ENCODE measurements at regions of chr1 and their contacts with region 1.

Region 1: DNA sequence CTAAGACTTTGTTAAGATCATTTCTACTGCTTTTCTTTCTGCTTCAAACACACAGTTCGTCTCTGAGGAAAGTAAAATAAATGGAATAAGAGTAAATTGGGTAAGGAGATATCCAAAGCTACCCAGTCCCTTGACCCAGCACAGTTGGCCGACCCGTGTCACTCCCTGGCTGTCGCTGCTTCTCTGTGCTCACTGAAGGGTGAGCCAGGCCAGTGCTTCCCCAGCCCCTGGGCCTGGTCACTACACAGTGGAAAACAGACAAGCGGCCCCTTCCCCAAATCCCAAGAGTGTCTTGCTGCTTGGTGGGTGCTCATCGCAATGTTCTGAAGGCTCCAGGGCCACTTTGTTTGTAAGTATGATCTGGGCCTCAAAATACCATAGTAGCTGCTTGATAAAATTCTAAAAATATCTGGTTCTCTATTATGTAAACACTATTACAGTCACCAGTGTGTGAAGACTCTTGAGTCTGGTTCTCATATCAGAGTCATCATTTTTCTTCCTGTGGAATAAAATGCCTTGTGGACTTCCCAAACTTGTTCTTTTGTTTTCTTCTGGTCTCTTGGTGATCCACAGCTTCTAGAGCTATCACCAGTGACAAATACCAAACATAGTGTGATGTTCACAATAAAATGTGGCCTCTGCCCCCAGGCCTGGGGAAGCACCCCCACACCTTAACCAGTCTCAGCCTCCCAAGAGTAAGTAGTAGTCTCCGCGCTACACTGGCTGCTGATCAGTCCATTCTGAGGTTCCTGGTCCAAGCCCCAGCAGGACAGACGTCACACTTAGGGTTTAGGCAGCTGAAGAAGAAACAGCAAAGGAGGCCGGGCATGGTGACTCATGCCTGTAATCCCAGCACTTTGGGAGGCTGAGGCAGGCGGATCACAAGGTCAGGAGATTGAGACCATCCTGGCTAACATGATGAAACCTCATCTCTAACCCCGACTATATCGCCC is 106.2 kb downstream of the DHRS3 start:
- DNase-seq: no peak
- ATAC-seq: no peak
- H3K4me3 ChIP-seq: peak overlapping the region; percentile 69
- H3K4me3 Mint-ChIP-seq: peak overlapping the region; percentile 79 to 97 (median 88)
- H3K27ac ChIP-seq: peak overlapping the region; percentile 75
- H3K27ac Mint-ChIP-seq: peak overlapping the region; percentile 94 to 100 (median 98)
- H3K4me1 ChIP-seq: peaks cover 26% of the 10 kb centered on the region in 2 donors
- H3K4me1 Mint-ChIP-seq: peaks cover 30 to 72% (median 59%) of the 10 kb centered on the region in 7 donors
- H3K27me3 ChIP-seq: no peaks in the 10 kb centered on the region
- H3K27me3 Mint-ChIP-seq: no peaks in the 10 kb centered on the region

Region 2: GRCh38 chr1:12100071-12100470 is 411.7 kb before region 1 on chr1:
- CTCF ChIA-PET with region 1: no interaction called
- POLR2A ChIA-PET with region 1: no interaction called
- intact Hi-C with region 1: no loop called
- DNase-seq: no peak
- ATAC-seq: no peak
- H3K4me3 ChIP-seq: no peak overlapping the region
- H3K4me3 Mint-ChIP-seq: no peak overlapping the region
- H3K27ac ChIP-seq: no peak overlapping the region
- H3K27ac Mint-ChIP-seq: no peak overlapping the region
- H3K4me1 ChIP-seq: peaks cover 0 to 4% of the 10 kb centered on the region in 2 donors
- H3K4me1 Mint-ChIP-seq: peaks cover 0 to 16% (median 0%) of the 10 kb centered on the region in 7 donors
- H3K27me3 ChIP-seq: no peaks in the 10 kb centered on the region
- H3K27me3 Mint-ChIP-seq: no peaks in the 10 kb centered on the region

Region 3: DNA sequence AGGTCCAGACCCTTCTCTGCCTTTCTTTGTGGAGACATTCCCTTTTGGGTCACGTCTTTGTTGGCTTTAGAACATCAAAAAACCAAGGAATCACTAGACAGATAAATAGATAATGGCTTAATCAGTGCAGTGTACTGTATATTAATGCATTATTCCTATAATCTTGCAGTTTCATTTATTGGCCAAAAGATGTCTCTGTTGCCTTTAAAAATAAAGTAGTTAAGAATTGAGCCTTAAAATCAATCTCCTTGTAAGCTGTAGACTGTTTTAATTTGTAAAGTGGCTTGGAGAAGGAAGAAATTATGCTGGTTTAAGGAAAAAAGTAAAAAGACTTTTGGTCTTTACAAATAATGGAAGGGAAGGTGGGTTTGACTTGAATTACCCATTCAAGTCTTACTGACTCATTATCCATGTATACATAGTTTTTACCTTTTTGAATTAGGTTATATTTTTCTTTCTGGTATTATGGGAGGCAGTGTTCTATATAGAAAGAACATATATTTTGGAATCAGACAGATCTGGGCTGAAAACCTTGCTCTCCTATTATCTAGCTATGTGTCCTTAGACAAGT is 197.4 kb before region 1 on chr1:
- CTCF ChIA-PET with region 1: no interaction called
- POLR2A ChIA-PET with region 1: no interaction called
- intact Hi-C with region 1: no loop called
- DNase-seq: peak in 5 of 9 donors; percentile 8 to 41 (median 17)
- ATAC-seq: no peak
- H3K4me3 ChIP-seq: no peak overlapping the region
- H3K4me3 Mint-ChIP-seq: no peak overlapping the region
- H3K27ac ChIP-seq: no peak overlapping the region
- H3K27ac Mint-ChIP-seq: no peak overlapping the region
- H3K4me1 ChIP-seq: no peaks in the 10 kb centered on the region
- H3K4me1 Mint-ChIP-seq: peaks cover 0 to 5% (median 0%) of the 10 kb centered on the region in 7 donors
- H3K27me3 ChIP-seq: no peaks in the 10 kb centered on the region
- H3K27me3 Mint-ChIP-seq: no peaks in the 10 kb centered on the region

Region 4: DNA sequence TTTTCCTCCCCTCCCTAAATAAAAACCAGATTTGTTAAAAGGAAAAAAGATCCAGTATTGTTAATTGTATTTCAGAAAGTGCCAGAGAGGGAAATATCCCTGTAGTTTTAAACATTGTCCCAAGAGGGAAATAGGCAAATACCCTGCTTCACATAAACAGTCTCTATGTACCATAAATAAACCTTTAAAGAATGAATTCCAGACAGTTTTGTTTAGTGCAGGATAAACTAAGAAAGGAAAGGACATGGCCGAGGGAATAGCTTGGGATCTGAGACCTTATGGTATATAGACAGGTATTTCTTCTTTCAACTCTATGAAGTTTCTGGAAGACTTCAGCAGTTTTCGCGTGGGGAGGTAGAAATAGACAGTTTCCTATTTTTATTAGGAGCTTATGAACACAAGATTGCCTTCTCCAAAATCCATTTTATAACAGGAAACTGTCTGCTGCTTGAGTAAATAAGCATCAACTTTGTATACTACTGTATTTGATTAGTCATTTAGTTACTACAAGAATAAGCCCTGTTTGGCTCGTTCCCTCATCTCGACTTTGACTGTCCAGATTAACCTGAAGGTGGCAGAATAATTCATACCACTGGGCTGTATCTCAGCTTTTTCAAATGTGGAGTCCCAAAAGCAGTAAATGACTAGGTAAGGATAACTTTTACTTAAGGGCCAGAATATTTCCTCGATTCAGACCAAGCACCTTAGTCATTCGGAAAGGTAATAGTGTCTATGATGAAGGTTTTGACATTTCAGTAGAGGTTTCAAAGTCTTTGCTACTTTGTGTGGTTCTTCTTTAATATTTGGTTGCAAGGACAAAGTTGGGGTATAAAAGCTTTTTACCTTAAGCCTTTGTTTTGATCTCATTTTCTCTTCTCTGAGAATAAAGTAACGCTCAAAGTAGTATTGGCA is 104.5 kb before region 1 on chr1:
- CTCF ChIA-PET with region 1: interaction called, 3 read pairs
- POLR2A ChIA-PET with region 1: interaction called, 4 read pairs
- intact Hi-C with region 1: loop called in 1 of 2 experiments (anchors 5 kb)
- DNase-seq: peak in 5 of 9 donors; percentile 20 to 45 (median 43)
- ATAC-seq: peak; percentile 49
- H3K4me3 ChIP-seq: no peak overlapping the region
- H3K4me3 Mint-ChIP-seq: no peak overlapping the region
- H3K27ac ChIP-seq: no peak overlapping the region
- H3K27ac Mint-ChIP-seq: peak overlapping the region in 2 of 9 donors; percentile 59 to 61
- H3K4me1 ChIP-seq: peaks cover 0 to 11% of the 10 kb centered on the region in 2 donors
- H3K4me1 Mint-ChIP-seq: peaks cover 10 to 57% (median 47%) of the 10 kb centered on the region in 7 donors
- H3K27me3 ChIP-seq: no peaks in the 10 kb centered on the region
- H3K27me3 Mint-ChIP-seq: no peaks in the 10 kb centered on the region

Region 5: DNA sequence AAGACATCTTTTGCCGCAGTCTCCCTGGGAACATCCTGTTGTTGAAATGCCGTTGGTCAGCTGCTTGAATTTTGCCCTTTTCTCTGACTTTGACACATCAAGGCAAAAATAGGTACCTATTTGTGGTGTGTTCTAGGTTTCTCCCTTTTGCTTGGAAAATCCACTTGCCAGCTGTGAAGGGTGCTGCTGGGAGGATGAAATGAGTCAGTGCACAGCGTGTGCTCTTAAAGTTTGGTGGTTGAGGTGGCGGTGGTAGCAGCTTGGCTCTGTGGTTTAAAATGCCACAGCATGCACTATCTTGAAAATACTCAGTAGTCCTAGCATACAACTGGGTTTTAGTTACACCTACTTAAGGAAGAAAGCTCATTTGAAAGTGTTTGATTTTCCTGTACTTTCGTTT is 77.6 kb before region 1 on chr1:
- CTCF ChIA-PET with region 1: interaction called, 4 read pairs
- POLR2A ChIA-PET with region 1: interaction called, 9 read pairs
- intact Hi-C with region 1: loop called (anchors 2 kb)
- DNase-seq: peak in 6 of 9 donors; percentile 32 to 70 (median 46)
- ATAC-seq: peak; percentile 79
- H3K4me3 ChIP-seq: peak overlapping the region; percentile 44
- H3K4me3 Mint-ChIP-seq: peak overlapping the region; percentile 54 to 76 (median 70)
- H3K27ac ChIP-seq: peak overlapping the region; percentile 58
- H3K27ac Mint-ChIP-seq: peak overlapping the region; percentile 69 to 92 (median 84)
- H3K4me1 ChIP-seq: peaks cover 52 to 56% of the 10 kb centered on the region in 2 donors
- H3K4me1 Mint-ChIP-seq: peaks cover 46 to 85% (median 71%) of the 10 kb centered on the region in 7 donors
- H3K27me3 ChIP-seq: no peaks in the 10 kb centered on the region
- H3K27me3 Mint-ChIP-seq: no peaks in the 10 kb centered on the region

Region 6: GRCh38 chr1:12454406-12455391 is 57.1 kb before region 1 on chr1:
- CTCF ChIA-PET with region 1: interaction called, 5 read pairs
- POLR2A ChIA-PET with region 1: interaction called, 11 read pairs
- intact Hi-C with region 1: loop called (anchors 1 kb)
- DNase-seq: no peak
- ATAC-seq: no peak
- H3K4me3 ChIP-seq: no peak overlapping the region
- H3K4me3 Mint-ChIP-seq: peak overlapping the region in 9 of 10 donors; percentile 14 to 81 (median 61)
- H3K27ac ChIP-seq: peak overlapping the region; percentile 28
- H3K27ac Mint-ChIP-seq: peak overlapping the region; percentile 11 to 98 (median 91)
- H3K4me1 ChIP-seq: peaks cover 12 to 91% of the 10 kb centered on the region in 2 donors
- H3K4me1 Mint-ChIP-seq: peaks cover 44 to 95% (median 93%) of the 10 kb centered on the region in 7 donors
- H3K27me3 ChIP-seq: no peaks in the 10 kb centered on the region
- H3K27me3 Mint-ChIP-seq: peaks cover 0 to 10% (median 0%) of the 10 kb centered on the region in 5 donors

Region 7: DNA sequence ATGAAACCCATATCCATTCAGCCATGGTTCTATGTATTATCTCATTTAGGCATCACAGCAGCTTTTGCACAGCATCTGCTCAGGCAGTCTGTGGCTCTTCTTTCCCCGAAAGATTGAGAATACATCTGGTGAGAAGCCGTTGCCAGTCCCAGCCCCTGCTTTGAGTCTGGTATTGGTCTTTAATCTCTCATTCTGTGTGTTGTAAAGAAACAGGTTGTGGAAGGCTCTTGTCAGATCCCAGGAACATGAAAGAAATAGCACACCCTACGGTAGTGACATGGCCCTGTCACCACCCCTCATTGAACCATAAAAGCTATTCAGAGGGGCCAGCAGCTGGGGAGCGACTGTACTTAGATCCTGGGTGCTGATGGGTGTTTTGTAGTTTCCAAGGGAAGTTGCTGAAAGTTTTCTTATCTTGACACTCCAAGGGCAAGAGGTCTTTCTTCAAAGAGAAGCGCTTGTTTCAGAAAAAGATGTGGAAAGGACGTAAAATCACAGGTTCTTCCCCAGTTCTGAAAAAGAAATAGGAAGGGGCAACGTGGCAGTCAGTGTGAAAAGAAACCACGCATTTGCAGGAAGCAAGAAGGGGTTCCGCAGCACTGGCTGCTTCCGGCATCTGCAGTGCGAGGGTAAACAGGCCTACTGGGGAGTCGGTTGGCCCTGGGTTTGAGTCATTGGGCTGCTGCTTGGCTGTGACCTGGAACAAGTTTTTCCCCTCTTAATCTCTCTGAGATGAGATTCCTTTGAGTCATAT is 38.8 kb before region 1 on chr1:
- CTCF ChIA-PET with region 1: interaction called, 5 read pairs
- POLR2A ChIA-PET with region 1: interaction called, 108 read pairs
- intact Hi-C with region 1: loop called in 1 of 2 experiments (anchors 2 kb)
- DNase-seq: peak in 8 of 9 donors; percentile 54 to 67 (median 60)
- ATAC-seq: peak; percentile 77
- H3K4me3 ChIP-seq: peak overlapping the region; percentile 11
- H3K4me3 Mint-ChIP-seq: peak overlapping the region; percentile 72 to 86 (median 78)
- H3K27ac ChIP-seq: peak overlapping the region; percentile 67
- H3K27ac Mint-ChIP-seq: peak overlapping the region; percentile 94 to 99 (median 96)
- H3K4me1 ChIP-seq: peaks cover 51 to 87% of the 10 kb centered on the region in 2 donors
- H3K4me1 Mint-ChIP-seq: peaks cover 53 to 96% (median 91%) of the 10 kb centered on the region in 7 donors
- H3K27me3 ChIP-seq: no peaks in the 10 kb centered on the region
- H3K27me3 Mint-ChIP-seq: no peaks in the 10 kb centered on the region

Region 8: GRCh38 chr1:12477936-12478611 is 33.7 kb before region 1 on chr1:
- CTCF ChIA-PET with region 1: interaction called, 5 read pairs
- POLR2A ChIA-PET with region 1: interaction called, 108 read pairs
- intact Hi-C with region 1: loop called (anchors 1 to 2 kb)
- DNase-seq: peak in 1 of 9 donors; percentile 27
- ATAC-seq: peak; percentile 19
- H3K4me3 ChIP-seq: peak overlapping the region; percentile 42
- H3K4me3 Mint-ChIP-seq: peak overlapping the region; percentile 71 to 86 (median 78)
- H3K27ac ChIP-seq: peak overlapping the region; percentile 66
- H3K27ac Mint-ChIP-seq: peak overlapping the region; percentile 89 to 99 (median 96)
- H3K4me1 ChIP-seq: peaks cover 64 to 89% of the 10 kb centered on the region in 2 donors
- H3K4me1 Mint-ChIP-seq: peaks cover 58 to 97% (median 94%) of the 10 kb centered on the region in 7 donors
- H3K27me3 ChIP-seq: no peaks in the 10 kb centered on the region
- H3K27me3 Mint-ChIP-seq: no peaks in the 10 kb centered on the region

Region 9: DNA sequence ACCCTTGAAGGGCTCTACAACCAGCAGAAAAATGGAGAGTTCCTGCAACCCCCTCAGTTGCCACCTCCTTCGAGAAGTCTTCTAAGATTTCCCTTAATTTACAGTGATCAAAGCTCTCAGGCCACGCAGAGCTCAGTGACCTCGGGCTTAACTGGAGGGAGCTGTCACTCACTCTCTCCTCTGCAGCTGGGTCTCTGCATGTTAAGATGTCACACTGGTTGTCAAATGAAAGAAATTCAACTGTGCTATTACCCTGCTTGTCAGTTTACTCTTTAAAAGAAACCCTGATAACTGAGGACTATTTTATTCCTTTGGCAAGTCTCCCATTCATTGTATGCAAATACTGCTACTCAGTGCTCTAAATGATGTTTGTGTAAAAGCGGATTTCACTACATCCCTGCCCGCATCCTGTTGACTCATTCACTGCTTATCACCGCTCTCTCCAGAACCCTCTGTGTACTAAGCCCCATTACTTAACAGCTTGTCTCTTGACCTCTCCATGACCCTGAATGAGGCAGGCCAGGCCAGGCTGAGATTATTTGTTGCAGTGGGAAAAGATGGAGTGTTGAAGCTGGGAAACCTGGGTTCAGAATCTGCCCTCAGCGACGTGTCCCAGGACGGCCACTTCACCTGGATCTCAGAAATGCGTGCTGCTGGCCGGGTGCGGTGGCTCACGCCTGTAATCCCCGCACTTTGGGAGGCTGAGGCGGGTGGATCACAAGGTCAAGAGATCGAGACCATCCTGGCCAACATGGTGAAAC is 92.5 kb after region 1 on chr1:
- CTCF ChIA-PET with region 1: no interaction called
- POLR2A ChIA-PET with region 1: interaction called, 13 read pairs
- intact Hi-C with region 1: no loop called
- DNase-seq: peak in 8 of 9 donors; percentile 36 to 78 (median 68)
- ATAC-seq: peak; percentile 90
- H3K4me3 ChIP-seq: no peak overlapping the region
- H3K4me3 Mint-ChIP-seq: peak overlapping the region; percentile 25 to 75 (median 68)
- H3K27ac ChIP-seq: peak overlapping the region; percentile 41
- H3K27ac Mint-ChIP-seq: peak overlapping the region; percentile 78 to 97 (median 88)
- H3K4me1 ChIP-seq: peaks cover 27 to 50% of the 10 kb centered on the region in 2 donors
- H3K4me1 Mint-ChIP-seq: peaks cover 23 to 94% (median 82%) of the 10 kb centered on the region in 7 donors
- H3K27me3 ChIP-seq: no peaks in the 10 kb centered on the region
- H3K27me3 Mint-ChIP-seq: peaks cover 0 to 2% (median 0%) of the 10 kb centered on the region in 5 donors